Activated CD4-positive, alpha-beta T cell treated with anti-CD3 and anti-CD28 coated beads, Interleukin-2, amount 10 ng/mL, durations not matched to agents 24 days and 14 days (primary cell): ENCODE measurements at regions of chr2 and their contacts with region 1.

Region 1: GRCh38 chr2:148020111-148021058 is at the start of gene ORC4:
- DNase-seq: peak; percentile 98
- H3K4me3 Mint-ChIP-seq: peak within 1 kb of the TSS; percentile 94
- H3K27ac Mint-ChIP-seq: peak within 1 kb of the TSS; percentile 93
- H3K4me1 Mint-ChIP-seq: peaks cover 45% of the 10 kb centered on the region
- H3K27me3 Mint-ChIP-seq: no peaks in the 10 kb centered on the region
- total RNA-seq, gene ORC4: 27.0 and 36.2 TPM in 2 replicates

Region 2: GRCh38 chr2:148071351-148071750 is 51.0 kb after region 1 on chr2:
- intact Hi-C with region 1: no loop called
- DNase-seq: no peak
- H3K4me3 Mint-ChIP-seq: no peak overlapping the region
- H3K27ac Mint-ChIP-seq: no peak overlapping the region
- H3K4me1 Mint-ChIP-seq: no peaks in the 10 kb centered on the region
- H3K27me3 Mint-ChIP-seq: no peaks in the 10 kb centered on the region

Region 3: DNA sequence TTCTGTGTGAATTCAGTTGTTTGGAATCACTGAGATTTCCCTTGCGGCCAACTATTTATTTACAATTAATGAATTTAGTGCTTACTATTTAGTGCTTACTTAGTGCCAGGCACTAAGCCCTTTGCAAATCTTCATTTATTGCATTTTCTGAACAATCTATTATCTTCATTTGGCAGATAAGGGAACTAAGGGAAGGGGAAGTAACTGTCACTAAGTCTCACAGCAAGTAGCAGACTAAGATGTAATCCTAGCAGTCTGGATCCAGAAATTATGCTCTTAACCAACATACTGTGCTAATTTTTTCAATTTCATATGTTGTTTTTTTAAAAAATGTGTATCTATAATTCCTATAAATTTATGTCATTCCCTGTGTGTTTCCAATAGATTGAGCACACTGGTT is 409.7 kb after region 1 on chr2:
- intact Hi-C with region 1: no loop called
- DNase-seq: no peak
- H3K4me3 Mint-ChIP-seq: no peak overlapping the region
- H3K27ac Mint-ChIP-seq: no peak overlapping the region
- H3K4me1 Mint-ChIP-seq: no peaks in the 10 kb centered on the region
- H3K27me3 Mint-ChIP-seq: no peaks in the 10 kb centered on the region

Region 4: GRCh38 chr2:148926291-148926961 is 906.0 kb after region 1 on chr2:
- intact Hi-C with region 1: loop called (anchors 2 kb)
- DNase-seq: peak; percentile 88
- H3K4me3 Mint-ChIP-seq: peak overlapping the region; percentile 88
- H3K27ac Mint-ChIP-seq: peak overlapping the region; percentile 88
- H3K4me1 Mint-ChIP-seq: peaks cover 21% of the 10 kb centered on the region
- H3K27me3 Mint-ChIP-seq: no peaks in the 10 kb centered on the region